ENCODE measurements at regions of chr5 and their contacts with region 1.

Region 1: DNA sequence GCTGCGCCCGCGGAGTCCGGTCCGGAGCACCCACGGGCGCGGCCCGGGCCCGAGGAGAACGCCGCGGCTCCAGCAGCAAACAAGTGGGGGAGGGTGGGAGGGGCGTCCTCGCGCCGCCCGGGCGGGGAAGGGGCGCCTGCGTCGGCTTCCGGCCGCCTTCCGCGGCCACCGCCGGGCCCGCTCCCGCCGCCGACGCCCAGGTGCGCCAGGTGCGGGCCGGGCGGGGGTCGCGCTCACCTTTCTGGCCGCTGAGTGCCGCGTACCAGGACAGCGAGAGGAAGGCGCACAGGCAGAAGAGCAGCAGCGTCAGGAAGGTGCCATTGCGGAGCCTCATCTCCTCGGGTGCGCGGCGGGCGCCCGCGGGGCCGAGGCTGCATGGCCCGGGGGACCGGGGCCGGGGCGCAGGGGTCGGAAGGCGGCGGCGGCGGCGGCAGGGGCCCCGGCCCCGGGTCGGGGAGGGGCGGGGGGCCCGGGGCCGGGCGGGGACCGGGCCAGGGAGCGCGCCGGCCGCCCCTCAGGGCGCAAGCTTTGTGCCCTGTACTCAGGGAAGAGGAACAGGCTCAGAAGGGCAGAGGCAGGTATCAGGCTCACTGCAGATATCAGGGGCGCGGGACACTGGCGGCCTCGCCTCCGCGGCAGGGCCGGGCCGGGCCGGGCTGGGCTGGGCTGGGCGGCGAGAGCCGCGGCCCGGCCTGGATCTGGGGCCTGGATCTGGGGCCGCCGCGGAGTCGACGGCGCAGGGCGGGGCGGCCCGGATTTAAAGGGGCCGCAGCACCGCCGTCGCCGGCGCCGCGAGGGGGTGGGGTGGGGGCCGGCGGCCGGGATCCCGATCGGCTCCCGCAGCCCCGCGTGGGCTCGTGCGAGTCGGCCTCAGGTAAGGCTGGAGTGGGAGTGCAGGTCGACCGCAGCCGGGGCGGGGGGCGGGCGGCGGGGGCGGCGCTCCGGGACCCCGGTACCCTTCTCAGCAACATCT is at the start of gene MGAT4B:
- DNase-seq: peak; percentile 72
- H3K4me3 Mint-ChIP-seq: peak within 1 kb of the TSS; percentile 86
- H3K27ac Mint-ChIP-seq: peak within 1 kb of the TSS; percentile 71
- H3K4me1 Mint-ChIP-seq: peaks cover 33% of the 10 kb centered on the region
- H3K27me3 Mint-ChIP-seq: no peaks in the 10 kb centered on the region
- total RNA-seq, gene MGAT4B: 95.8 to 96.8 TPM

Region 2: DNA sequence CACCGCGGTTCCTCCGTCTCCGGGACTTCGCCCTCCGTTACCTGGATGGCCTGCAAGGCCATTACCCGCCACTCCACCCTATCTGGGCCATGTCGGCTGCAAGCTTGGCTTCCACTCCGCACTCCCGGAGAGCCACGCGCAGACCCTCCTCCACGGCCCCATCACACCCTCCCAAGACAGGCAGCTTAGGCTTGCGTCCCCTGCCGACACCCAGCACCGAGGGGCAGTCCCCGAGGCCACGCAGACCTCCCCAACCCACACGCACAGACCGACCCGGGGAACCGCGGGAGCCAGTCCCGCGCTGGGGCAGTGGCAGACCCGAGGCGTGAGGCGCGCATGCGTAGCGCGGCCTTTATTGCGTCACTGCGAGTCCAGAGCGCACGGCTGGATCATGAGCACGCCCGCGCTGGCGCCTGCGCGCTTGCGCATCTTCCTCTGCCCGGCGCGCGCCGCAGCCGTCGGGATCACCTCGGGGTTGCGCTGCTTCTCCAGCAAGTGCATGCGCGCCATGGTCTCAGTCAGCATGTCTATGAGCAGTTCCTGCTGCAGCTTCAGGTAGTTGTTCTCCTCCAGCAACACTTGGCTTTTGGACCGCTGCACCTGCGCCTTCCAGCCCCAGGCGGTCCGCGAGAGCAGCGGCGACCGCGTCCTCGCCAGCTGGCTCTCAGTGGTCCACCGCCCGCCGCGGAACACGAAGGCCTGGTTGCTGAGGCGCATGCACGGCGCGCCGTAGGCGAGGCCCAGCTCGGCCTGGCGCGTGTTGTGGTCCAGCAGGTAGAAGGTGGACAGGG is 128.1 kb before region 1 on chr5:
- CTCF ChIA-PET with region 1: interaction called, 4 read pairs
- POLR2A ChIA-PET with region 1: no interaction called
- intact Hi-C with region 1: loop called (anchors 5 kb)
- DNase-seq: peak; percentile 96
- H3K4me3 Mint-ChIP-seq: peak overlapping the region; percentile 94
- H3K27ac Mint-ChIP-seq: peak overlapping the region; percentile 93
- H3K4me1 Mint-ChIP-seq: peaks cover 24% of the 10 kb centered on the region
- H3K27me3 Mint-ChIP-seq: no peaks in the 10 kb centered on the region

Region 3: DNA sequence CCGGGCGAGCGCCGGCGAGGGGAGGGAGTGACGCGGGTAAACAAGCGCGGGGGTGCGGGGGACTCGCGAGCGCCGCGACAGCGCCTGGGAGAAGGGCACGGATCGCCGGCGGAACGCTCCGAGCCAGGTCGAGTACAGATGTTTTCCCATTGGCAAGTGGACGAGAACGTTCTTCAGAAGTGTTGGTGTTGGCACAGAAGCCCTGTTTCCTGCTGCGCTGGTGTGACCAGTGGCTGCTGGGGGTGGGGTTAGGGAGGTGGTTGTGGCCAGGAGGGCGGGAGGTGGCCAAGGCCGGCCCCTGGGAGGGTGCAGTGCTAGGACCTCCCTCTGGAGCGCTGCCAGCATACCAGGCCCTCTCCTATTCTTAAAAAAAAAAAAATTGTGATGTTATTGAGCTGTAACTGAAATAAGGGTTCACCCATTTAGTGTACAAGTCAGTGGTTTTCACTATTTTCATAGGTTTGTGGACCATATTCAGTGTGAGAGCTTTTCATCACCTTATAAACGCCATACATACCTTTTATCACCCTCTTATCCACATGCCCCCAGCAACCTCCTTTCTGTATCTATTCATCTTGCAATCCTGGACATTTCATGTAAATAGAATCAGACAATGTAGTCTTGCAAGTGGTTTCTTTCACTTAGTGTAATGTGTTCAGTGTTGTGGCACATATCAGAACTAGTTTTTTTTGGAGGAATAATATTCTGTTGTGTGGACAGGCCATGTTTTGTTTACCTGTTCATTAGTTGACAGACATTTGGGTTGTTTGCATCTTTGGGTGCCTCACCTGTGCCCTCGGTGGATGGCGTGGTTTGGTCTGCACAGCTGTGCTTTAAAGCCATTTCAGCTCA is 15.3 kb after region 1 on chr5:
- CTCF ChIA-PET with region 1: interaction called, 11 read pairs
- POLR2A ChIA-PET with region 1: interaction called, 19 read pairs
- intact Hi-C with region 1: loop called (anchors 1 kb)
- DNase-seq: peak; percentile 92
- H3K4me3 Mint-ChIP-seq: peak overlapping the region; percentile 90
- H3K27ac Mint-ChIP-seq: peak overlapping the region; percentile 95
- H3K4me1 Mint-ChIP-seq: peaks cover 49% of the 10 kb centered on the region
- H3K27me3 Mint-ChIP-seq: no peaks in the 10 kb centered on the region

Region 4: GRCh38 chr5:179858586-179859427 is 52.3 kb after region 1 on chr5 and contains the start of gene MRNIP:
- CTCF ChIA-PET with region 1: interaction called, 16 read pairs
- POLR2A ChIA-PET with region 1: interaction called, 4 read pairs
- intact Hi-C with region 1: loop called (anchors 1 kb)
- DNase-seq: peak; percentile 94
- H3K4me3 Mint-ChIP-seq: peak within 1 kb of the TSS; percentile 79
- H3K27ac Mint-ChIP-seq: peak within 1 kb of the TSS; percentile 61
- H3K4me1 Mint-ChIP-seq: peaks cover 16% of the 10 kb centered on the region
- H3K27me3 Mint-ChIP-seq: no peaks in the 10 kb centered on the region
- total RNA-seq, gene MRNIP: 19.8 to 24.9 TPM

Region 5: GRCh38 chr5:180071531-180072255 is 265.2 kb after region 1 on chr5 and contains the start of gene RNF130:
- CTCF ChIA-PET with region 1: no interaction called
- POLR2A ChIA-PET with region 1: no interaction called
- intact Hi-C with region 1: loop called (anchors 5 kb)
- DNase-seq: peak; percentile 91
- H3K4me3 Mint-ChIP-seq: peak within 1 kb of the TSS; percentile 78
- H3K27ac Mint-ChIP-seq: peak within 1 kb of the TSS; percentile 63
- H3K4me1 Mint-ChIP-seq: peaks cover 29% of the 10 kb centered on the region
- H3K27me3 Mint-ChIP-seq: peaks cover 2% of the 10 kb centered on the region
- total RNA-seq, gene RNF130: 9.9 to 10.1 TPM

Measured in activated CD4-positive, alpha-beta memory T cell treated with anti-CD3 and anti-CD28 coated beads for 36 hours (primary cell).